ENCODE measurements at regions of chr17 and their contacts with region 1.

Region 1: GRCh38 chr17:7177196-7177953 is 1.8 kb downstream of the ASGR1 start:
- DNase-seq: peak; percentile 54 to 66
- H3K4me3 ChIP-seq: peak overlapping the region; percentile 21 to 65 (median 50)
- H3K27ac ChIP-seq: no peak overlapping the region
- H3K4me1 ChIP-seq: peaks cover 0 to 13% of the 10 kb centered on the region in 2 donors
- H3K27me3 ChIP-seq: no peaks in the 10 kb centered on the region
- CTCF ChIP-seq: peak; percentile 66 to 81 (median 76)
- POLR2A ChIP-seq: no peak

Region 2: GRCh38 chr17:7045909-7046724 is 131.3 kb before region 1 on chr17:
- intact Hi-C with region 1: no loop called
- DNase-seq: peak; percentile 92
- H3K4me3 ChIP-seq: peak overlapping the region in 2 of 3 donors; percentile 24 to 50
- H3K27ac ChIP-seq: peak overlapping the region; percentile 85 to 89
- H3K4me1 ChIP-seq: peaks cover 5 to 12% of the 10 kb centered on the region in 2 donors
- H3K27me3 ChIP-seq: no peaks in the 10 kb centered on the region
- CTCF ChIP-seq: peak; percentile 68 to 93 (median 89)
- POLR2A ChIP-seq: no peak

Region 3: GRCh38 chr17:7056386-7056785 is 121.0 kb before region 1 on chr17:
- intact Hi-C with region 1: loop called (anchors 1 kb)
- DNase-seq: no peak
- H3K4me3 ChIP-seq: no peak overlapping the region
- H3K27ac ChIP-seq: no peak overlapping the region
- H3K4me1 ChIP-seq: no peaks in the 10 kb centered on the region
- H3K27me3 ChIP-seq: no peaks in the 10 kb centered on the region
- CTCF ChIP-seq: no peak
- POLR2A ChIP-seq: no peak

Region 4: DNA sequence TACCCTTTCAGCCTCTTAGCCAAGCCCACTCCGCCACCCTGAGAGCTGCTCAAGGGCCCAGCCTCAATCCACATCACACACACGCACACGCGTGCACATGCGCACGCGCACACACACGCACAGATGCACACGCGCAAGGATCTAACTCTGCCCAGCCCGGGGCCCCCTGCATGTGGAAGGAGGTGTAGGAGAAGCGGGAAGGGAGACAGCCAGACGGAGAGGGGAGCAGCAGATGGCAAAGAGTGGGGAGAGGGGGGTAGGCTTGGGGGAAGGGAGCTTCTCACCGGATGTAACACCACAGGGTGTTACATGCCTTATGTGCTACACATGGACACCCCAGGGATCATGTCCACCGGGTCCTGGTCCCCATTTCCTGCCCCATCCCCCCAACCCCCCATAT is 27.0 kb after region 1 on chr17:
- intact Hi-C with region 1: loop called (anchors 1 kb)
- DNase-seq: no peak
- H3K4me3 ChIP-seq: peak overlapping the region; percentile 45 to 71 (median 55)
- H3K27ac ChIP-seq: peak overlapping the region; percentile 68 to 81
- H3K4me1 ChIP-seq: no peaks in the 10 kb centered on the region
- H3K27me3 ChIP-seq: no peaks in the 10 kb centered on the region
- CTCF ChIP-seq: no peak
- POLR2A ChIP-seq: no peak

Measured in breast epithelium (tissue), 4 donors.